ENCODE measurements at regions of chr18 and their contacts with region 1.

Region 1: DNA sequence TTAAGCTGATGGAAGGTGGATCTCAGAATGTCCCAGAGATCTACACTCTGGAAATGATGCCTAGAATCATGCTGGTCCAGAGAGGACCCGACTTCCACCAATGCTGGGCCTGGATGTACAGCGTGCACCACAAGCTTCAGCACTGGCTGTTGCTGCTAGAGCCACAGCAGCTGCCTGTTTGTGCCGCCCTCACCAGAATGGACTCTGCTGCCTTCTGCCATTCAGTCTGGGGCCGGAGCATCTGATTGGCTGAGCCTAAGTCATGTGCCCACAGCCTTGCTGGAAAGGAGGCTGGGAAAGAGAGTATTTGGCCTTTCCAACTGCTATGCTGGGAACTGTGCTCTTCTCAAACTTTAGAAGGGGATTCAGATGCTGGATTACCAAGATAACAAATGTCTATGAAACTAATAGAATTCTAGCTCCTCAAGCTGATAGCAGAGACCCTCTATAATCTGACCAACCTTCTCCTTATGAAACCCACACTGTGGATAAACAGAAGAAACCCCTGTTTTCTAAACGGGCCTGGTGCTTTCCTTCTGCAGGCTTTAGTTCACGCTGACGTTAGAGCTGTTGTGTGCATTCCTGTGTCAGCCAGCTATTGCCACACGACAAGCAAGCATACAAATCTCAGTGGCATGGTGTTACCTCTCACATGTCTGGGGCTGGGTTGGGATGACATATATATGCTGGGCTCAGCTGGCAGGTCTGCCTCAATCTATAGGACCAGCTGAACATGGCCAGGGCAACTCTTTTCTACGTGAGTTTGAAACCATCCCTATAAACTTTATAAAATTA is 4.1 kb upstream of the LOXHD1 start:
- ATAC-seq: peak; percentile 8 to 85 (median 65)
- H3K4me3 ChIP-seq: no peak overlapping the region
- H3K27ac ChIP-seq: no peak overlapping the region
- H3K4me1 ChIP-seq: peaks cover 0 to 4% of the 10 kb centered on the region in 2 donors

Region 2: GRCh38 chr18:46148810-46149209 is 512.3 kb before region 1 on chr18:
- in situ Hi-C with region 1: loop called in 8 of 9 experiments (anchors 10 to 25 kb)
- ATAC-seq: peak in 4 of 8 experiments; percentile 32 to 82 (median 38)
- H3K4me3 ChIP-seq: no peak overlapping the region
- H3K27ac ChIP-seq: no peak overlapping the region
- H3K4me1 ChIP-seq: peaks cover 10 to 14% of the 10 kb centered on the region in 2 donors

Region 3: GRCh38 chr18:46155641-46156051 is 505.5 kb before region 1 on chr18:
- in situ Hi-C with region 1: loop called in 7 of 9 experiments (anchors 10 to 25 kb)
- ATAC-seq: no peak
- H3K4me3 ChIP-seq: no peak overlapping the region
- H3K27ac ChIP-seq: no peak overlapping the region
- H3K4me1 ChIP-seq: peaks cover 10 to 15% of the 10 kb centered on the region in 2 donors

Region 4: DNA sequence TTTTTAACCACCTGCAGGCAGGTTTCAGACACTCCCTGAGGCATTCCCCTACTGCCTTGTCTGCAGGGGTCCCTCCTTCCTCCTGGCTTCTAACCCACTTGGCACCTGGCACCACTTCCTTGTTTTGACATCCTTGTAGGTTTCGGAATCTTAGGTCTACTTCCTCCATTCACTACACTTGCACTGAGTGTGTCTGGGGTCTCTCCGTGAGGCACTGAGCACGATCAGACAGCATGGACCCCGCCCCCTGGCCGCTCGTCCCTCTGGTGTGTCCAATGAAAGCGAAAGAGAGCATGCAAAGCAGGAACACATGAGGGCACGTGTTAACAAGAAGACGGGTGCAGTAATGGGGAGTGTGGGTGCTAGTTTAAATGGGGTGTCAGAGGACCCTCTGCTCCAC is 493.2 kb before region 1 on chr18:
- in situ Hi-C with region 1: loop called in 6 of 9 experiments (anchors 10 to 25 kb)
- ATAC-seq: no peak
- H3K4me3 ChIP-seq: no peak overlapping the region
- H3K27ac ChIP-seq: no peak overlapping the region
- H3K4me1 ChIP-seq: peaks cover 0 to under 1% of the 10 kb centered on the region in 2 donors

Region 5: GRCh38 chr18:46173393-46174341 is 487.5 kb before region 1 on chr18:
- in situ Hi-C with region 1: loop called in 6 of 9 experiments (anchors 10 to 25 kb)
- ATAC-seq: peak; percentile 91 to 96 (median 94)
- H3K4me3 ChIP-seq: peak overlapping the region; percentile 81 to 86 (median 83)
- H3K27ac ChIP-seq: peak overlapping the region; percentile 76 to 87
- H3K4me1 ChIP-seq: peaks cover 5 to 6% of the 10 kb centered on the region in 2 donors

Region 6: GRCh38 chr18:46281185-46282176 is 379.7 kb before region 1 on chr18:
- in situ Hi-C with region 1: loop called in 8 of 9 experiments (anchors 25 kb)
- ATAC-seq: peak; percentile 55 to 90 (median 70)
- H3K4me3 ChIP-seq: no peak overlapping the region
- H3K27ac ChIP-seq: no peak overlapping the region
- H3K4me1 ChIP-seq: peaks cover 23 to 33% of the 10 kb centered on the region in 2 donors

Region 7: DNA sequence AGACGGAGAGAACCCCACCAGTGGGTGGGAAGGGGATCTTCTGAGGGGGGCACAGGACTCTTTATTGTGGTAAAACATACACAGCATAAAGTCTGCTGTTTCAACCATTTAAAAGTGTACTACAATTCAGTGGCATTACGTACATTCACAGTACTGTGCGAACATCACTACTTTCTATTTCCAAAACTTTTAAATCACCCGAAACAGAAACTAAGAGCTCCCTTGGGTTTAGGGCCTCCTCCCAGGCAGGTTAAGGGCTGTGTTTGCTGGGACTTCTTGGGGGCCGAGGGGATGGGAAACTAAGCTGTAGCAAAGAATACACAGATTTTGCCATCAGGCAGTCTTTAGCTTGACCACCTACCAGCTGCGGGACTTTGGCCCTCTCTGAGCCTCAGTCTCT is 314.9 kb before region 1 on chr18:
- in situ Hi-C with region 1: no loop called
- ATAC-seq: no peak
- H3K4me3 ChIP-seq: no peak overlapping the region
- H3K27ac ChIP-seq: no peak overlapping the region
- H3K4me1 ChIP-seq: peaks cover 21 to 30% of the 10 kb centered on the region in 2 donors

Region 8: GRCh38 chr18:46518438-46518837 is 142.7 kb before region 1 on chr18:
- in situ Hi-C with region 1: no loop called
- ATAC-seq: peak in 2 of 8 experiments; percentile 25 to 59
- H3K4me3 ChIP-seq: no peak overlapping the region
- H3K27ac ChIP-seq: no peak overlapping the region
- H3K4me1 ChIP-seq: no peaks in the 10 kb centered on the region